ENCODE measurements at regions of chr14 and their contacts with region 1.

Region 1: DNA sequence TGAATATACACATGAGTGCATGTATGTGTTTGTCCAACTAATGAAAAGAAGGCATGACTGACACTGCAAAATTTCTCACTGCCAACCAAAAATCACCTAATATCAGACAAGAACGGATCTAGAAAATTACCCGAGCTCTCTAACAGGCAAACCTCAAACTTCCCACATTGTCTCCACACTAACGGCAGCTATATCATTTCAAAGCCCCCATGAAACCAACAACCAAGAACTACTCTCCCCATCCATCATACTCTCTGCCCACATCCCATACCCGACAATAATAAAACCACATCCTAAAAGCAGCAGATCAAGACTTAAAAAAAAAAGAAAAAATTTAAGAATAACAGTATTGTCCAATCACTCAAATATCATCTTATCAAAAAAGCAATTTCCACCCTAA is 227.1 kb downstream of the CEP128 start:
- DNase-seq: no peak
- H3K4me3 ChIP-seq: no peak overlapping the region
- H3K27ac ChIP-seq: no peak overlapping the region
- H3K4me1 ChIP-seq: no peaks in the 10 kb centered on the region
- H3K27me3 ChIP-seq: no peaks in the 10 kb centered on the region
- CTCF ChIP-seq: no peak

Region 2: GRCh38 chr14:80653956-80654355 is 60.5 kb before region 1 on chr14:
- CTCF ChIA-PET with region 1: no interaction called
- POLR2A ChIA-PET with region 1: interaction called, 23 read pairs
- intact Hi-C with region 1: no loop called
- DNase-seq: no peak
- H3K4me3 ChIP-seq: no peak overlapping the region
- H3K27ac ChIP-seq: no peak overlapping the region
- H3K4me1 ChIP-seq: no peaks in the 10 kb centered on the region
- H3K27me3 ChIP-seq: no peaks in the 10 kb centered on the region
- CTCF ChIP-seq: no peak

Measured in PC-9 (cell line).